ENCODE measurements at regions of chr17 and their contacts with region 1.

Region 1: DNA sequence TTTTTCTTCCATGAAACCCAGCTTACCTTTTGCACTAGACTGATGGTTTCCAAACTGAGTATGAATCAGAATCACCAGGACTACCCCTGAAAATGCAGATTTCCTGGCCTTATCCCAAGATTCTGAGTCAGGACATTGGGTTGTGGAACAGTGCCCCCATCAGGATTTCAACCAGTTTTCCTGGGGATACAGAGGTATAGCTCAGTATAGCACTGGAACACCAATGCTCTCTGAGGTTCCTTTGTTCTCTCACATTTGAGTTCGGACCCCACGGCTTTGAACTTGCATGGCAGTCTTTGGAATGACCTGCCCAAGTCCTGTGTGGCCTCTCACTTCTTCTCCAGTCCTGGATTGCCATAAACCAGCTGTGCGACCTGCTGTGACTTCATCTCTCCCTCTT is 12.8 kb upstream of the CCL8 start:
- DNase-seq: peak; percentile 51
- ATAC-seq: peak; percentile 98
- H3K4me3 Mint-ChIP-seq: no peak overlapping the region
- H3K27ac Mint-ChIP-seq: no peak overlapping the region
- H3K4me1 Mint-ChIP-seq: peaks cover 5% of the 10 kb centered on the region
- H3K27me3 Mint-ChIP-seq: no peaks in the 10 kb centered on the region; the same call in 1 of the 2 replicates
- CTCF ChIP-seq: no peak

Region 2: GRCh38 chr17:34199932-34200534 is 106.4 kb before region 1 on chr17:
- CTCF ChIA-PET with region 1: interaction called, 109 read pairs
- POLR2A ChIA-PET with region 1: interaction called, 3 read pairs
- DNase-seq: peak; percentile 77
- ATAC-seq: peak; percentile 94
- H3K4me3 Mint-ChIP-seq: no peak overlapping the region
- H3K27ac Mint-ChIP-seq: no peak overlapping the region
- H3K4me1 Mint-ChIP-seq: peaks cover 13% of the 10 kb centered on the region
- H3K27me3 Mint-ChIP-seq: peaks cover 11% of the 10 kb centered on the region
- CTCF ChIP-seq: peak; percentile 100

Region 3: GRCh38 chr17:34285286-34285792 is 21.1 kb before region 1 on chr17 and contains the start of gene CCL11:
- CTCF ChIA-PET with region 1: no interaction called
- POLR2A ChIA-PET with region 1: no interaction called
- DNase-seq: no peak
- ATAC-seq: no peak
- H3K4me3 Mint-ChIP-seq: no peak within 1 kb of the TSS
- H3K27ac Mint-ChIP-seq: no peak within 1 kb of the TSS
- H3K4me1 Mint-ChIP-seq: no peaks in the 10 kb centered on the region
- H3K27me3 Mint-ChIP-seq: peaks cover 42% of the 10 kb centered on the region
- CTCF ChIP-seq: no peak
- total RNA-seq, gene CCL11: not detected in 3 replicates

Region 4: GRCh38 chr17:34527908-34528470 is 221.5 kb after region 1 on chr17:
- CTCF ChIA-PET with region 1: no interaction called
- POLR2A ChIA-PET with region 1: no interaction called
- DNase-seq: peak; percentile 61
- ATAC-seq: peak; percentile 94
- H3K4me3 Mint-ChIP-seq: no peak overlapping the region
- H3K27ac Mint-ChIP-seq: no peak overlapping the region
- H3K4me1 Mint-ChIP-seq: peaks cover 16% of the 10 kb centered on the region
- H3K27me3 Mint-ChIP-seq: no peaks in the 10 kb centered on the region; the same call in none of the 2 replicates
- CTCF ChIP-seq: peak; percentile 82

Measured in WTC11 (cell line).